IMR-90 (cell line): ENCODE measurements at regions of chr22 and their contacts with region 1.

Region 1: GRCh38 chr22:40645579-40646197 is 9.2 kb upstream of the MRTFA start:
- DNase-seq: no peak
- ATAC-seq: no peak
- H3K4me3 ChIP-seq: no peak overlapping the region
- H3K27ac ChIP-seq: no peak overlapping the region
- H3K4me1 ChIP-seq: peaks cover 2% of the 10 kb centered on the region; the same call in 1 of the 2 replicates
- H3K27me3 ChIP-seq: no peaks in the 10 kb centered on the region
- CTCF ChIP-seq: no peak
- POLR2A ChIP-seq: no peak
- RAD21 ChIP-seq: no peak

Region 2: GRCh38 chr22:40055143-40055883 is 590.4 kb before region 1 on chr22:
- CTCF ChIA-PET with region 1: no interaction called
- POLR2A ChIA-PET with region 1: no interaction called
- dilution Hi-C with region 1: no loop called
- in situ Hi-C with region 1: no loop called
- intact Hi-C with region 1: no loop called
- DNase-seq: no peak
- ATAC-seq: no peak
- H3K4me3 ChIP-seq: no peak overlapping the region
- H3K27ac ChIP-seq: no peak overlapping the region
- H3K4me1 ChIP-seq: no peaks in the 10 kb centered on the region; the same call in 1 of the 2 replicates
- H3K27me3 ChIP-seq: no peaks in the 10 kb centered on the region
- CTCF ChIP-seq: no peak
- POLR2A ChIP-seq: no peak
- RAD21 ChIP-seq: no peak

Region 3: GRCh38 chr22:40376149-40376548 is 269.5 kb before region 1 on chr22:
- CTCF ChIA-PET with region 1: no interaction called
- POLR2A ChIA-PET with region 1: no interaction called
- dilution Hi-C with region 1: no loop called
- in situ Hi-C with region 1: no loop called
- intact Hi-C with region 1: loop called (anchors 5 kb)
- DNase-seq: no peak
- ATAC-seq: no peak
- H3K4me3 ChIP-seq: no peak overlapping the region
- H3K27ac ChIP-seq: no peak overlapping the region
- H3K4me1 ChIP-seq: peaks cover 3% of the 10 kb centered on the region; the same call in 1 of the 2 replicates
- H3K27me3 ChIP-seq: no peaks in the 10 kb centered on the region
- CTCF ChIP-seq: no peak
- POLR2A ChIP-seq: no peak
- RAD21 ChIP-seq: no peak

Region 4: DNA sequence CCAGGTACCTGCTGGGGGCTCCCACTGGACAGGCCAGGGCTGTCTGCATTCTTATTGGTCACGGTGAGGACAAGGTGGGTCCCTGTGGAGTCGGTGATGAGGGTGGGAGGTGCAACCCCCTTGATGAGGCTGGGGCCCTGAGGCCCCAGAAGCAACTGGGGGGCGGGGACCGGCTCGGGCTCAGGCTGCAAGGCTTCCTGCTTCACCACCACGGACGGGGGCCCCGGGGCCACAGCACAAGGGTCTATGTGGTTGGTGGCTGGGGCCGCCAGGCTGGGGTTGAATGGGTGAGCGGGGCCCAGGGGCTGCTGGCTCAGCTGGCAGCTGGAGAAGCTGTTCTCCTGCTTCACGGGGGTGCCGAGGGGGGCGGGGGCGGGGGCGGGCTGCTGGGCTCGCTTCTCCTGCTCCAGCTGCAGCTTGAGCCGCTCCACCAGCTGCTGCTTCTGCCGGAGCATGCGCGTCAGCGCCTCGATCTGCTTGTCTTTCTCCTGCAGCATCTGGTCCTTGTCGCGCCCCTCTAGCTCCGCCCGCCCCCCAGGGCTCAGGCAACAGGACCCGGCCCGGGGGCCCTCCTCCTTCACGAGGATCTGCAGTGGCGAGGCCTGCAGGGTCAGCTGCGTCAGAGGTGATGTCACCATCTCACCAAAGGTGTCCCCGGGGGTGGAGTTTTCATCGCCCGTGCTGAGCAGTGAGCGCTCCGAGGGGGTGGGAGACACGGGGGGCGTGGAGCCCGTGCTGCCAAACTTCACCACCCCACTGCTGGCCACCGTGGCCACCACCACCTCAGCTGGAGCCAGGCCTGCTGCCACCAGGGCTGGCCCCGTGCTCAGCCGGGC is 227.1 kb before region 1 on chr22:
- CTCF ChIA-PET with region 1: no interaction called
- POLR2A ChIA-PET with region 1: no interaction called
- dilution Hi-C with region 1: no loop called
- in situ Hi-C with region 1: no loop called
- intact Hi-C with region 1: no loop called
- DNase-seq: peak; percentile 56
- ATAC-seq: no peak; the same call in 1 of the 2 replicates
- H3K4me3 ChIP-seq: no peak overlapping the region
- H3K27ac ChIP-seq: no peak overlapping the region
- H3K4me1 ChIP-seq: peaks cover 5% of the 10 kb centered on the region; the same call in 1 of the 2 replicates
- H3K27me3 ChIP-seq: no peaks in the 10 kb centered on the region
- CTCF ChIP-seq: no peak
- POLR2A ChIP-seq: no peak
- RAD21 ChIP-seq: no peak

Region 5: DNA sequence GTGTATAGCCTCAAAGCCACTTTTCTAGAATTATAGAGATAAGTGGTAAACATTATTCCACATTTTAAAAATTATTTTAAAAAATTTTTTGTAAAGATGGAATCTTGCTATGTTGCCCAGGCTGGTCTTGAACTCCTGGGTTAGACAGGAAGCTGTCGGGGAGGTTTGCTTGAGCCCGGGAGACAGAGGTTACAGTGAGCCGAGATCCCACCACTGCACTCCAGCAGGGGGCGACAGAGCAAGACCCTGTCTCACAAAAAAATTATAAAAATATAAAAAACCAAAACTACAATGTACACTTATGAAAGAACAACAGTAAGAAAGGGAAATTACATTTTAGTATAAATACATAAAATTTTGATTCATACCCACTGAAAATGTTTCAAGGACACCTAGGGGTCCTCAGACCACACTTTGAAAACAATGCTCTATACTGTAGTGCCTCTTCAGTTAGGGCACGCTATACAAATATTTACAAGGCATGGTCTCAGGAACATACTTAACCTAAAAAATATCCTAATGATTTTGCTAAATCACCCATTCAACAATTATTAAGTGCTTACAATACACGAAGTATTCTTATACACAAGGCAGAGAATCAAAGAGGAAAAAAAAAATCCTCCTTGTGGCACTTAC is 120.3 kb before region 1 on chr22:
- CTCF ChIA-PET with region 1: interaction called, 9 read pairs
- POLR2A ChIA-PET with region 1: no interaction called
- dilution Hi-C with region 1: no loop called
- in situ Hi-C with region 1: loop called (anchors 5 kb)
- intact Hi-C with region 1: loop called (anchors 1 kb)
- DNase-seq: peak; percentile 46
- ATAC-seq: no peak
- H3K4me3 ChIP-seq: no peak overlapping the region
- H3K27ac ChIP-seq: no peak overlapping the region
- H3K4me1 ChIP-seq: peaks cover 7% of the 10 kb centered on the region; the same call in 1 of the 2 replicates
- H3K27me3 ChIP-seq: no peaks in the 10 kb centered on the region
- CTCF ChIP-seq: peak; percentile 63
- POLR2A ChIP-seq: no peak
- RAD21 ChIP-seq: peak; percentile 58

Region 6: GRCh38 chr22:40597526-40598430 is 47.9 kb before region 1 on chr22:
- CTCF ChIA-PET with region 1: no interaction called
- POLR2A ChIA-PET with region 1: no interaction called
- dilution Hi-C with region 1: no loop called
- in situ Hi-C with region 1: no loop called
- intact Hi-C with region 1: no loop called
- DNase-seq: peak; percentile 41
- ATAC-seq: peak; percentile 70
- H3K4me3 ChIP-seq: no peak overlapping the region
- H3K27ac ChIP-seq: peak overlapping the region; percentile 76; the same call in 1 of the 2 replicates
- H3K4me1 ChIP-seq: peaks cover 9% of the 10 kb centered on the region
- H3K27me3 ChIP-seq: no peaks in the 10 kb centered on the region
- CTCF ChIP-seq: no peak
- POLR2A ChIP-seq: no peak
- RAD21 ChIP-seq: no peak